ENCODE measurements at regions of chr22 and their contacts with region 1.

Region 1: GRCh38 chr22:34950489-34950888 is 115.5 kb upstream of the ISX start:
- DNase-seq: no peak
- ATAC-seq: no peak
- H3K4me3 ChIP-seq: no peak overlapping the region
- H3K27ac ChIP-seq: no peak overlapping the region
- H3K4me1 ChIP-seq: no peaks in the 10 kb centered on the region
- H3K27me3 ChIP-seq: peaks cover 0 to 18% (median 3%) of the 10 kb centered on the region in 7 donors
- CTCF ChIP-seq: no peak

Region 2: GRCh38 chr22:34866495-34867131 is 83.9 kb before region 1 on chr22:
- intact Hi-C with region 1: loop called in 1 of 10 experiments (anchors 5 kb)
- DNase-seq: no peak
- ATAC-seq: peak in 1 of 8 donors; percentile 66
- H3K4me3 ChIP-seq: no peak overlapping the region
- H3K27ac ChIP-seq: no peak overlapping the region
- H3K4me1 ChIP-seq: peaks cover 0 to 3% (median 0%) of the 10 kb centered on the region in 9 donors
- H3K27me3 ChIP-seq: peaks cover 0 to 25% (median 0%) of the 10 kb centered on the region in 7 donors
- CTCF ChIP-seq: no peak